IMR-90 (cell line): ENCODE measurements at regions of chr6 and their contacts with region 1.

Region 1: DNA sequence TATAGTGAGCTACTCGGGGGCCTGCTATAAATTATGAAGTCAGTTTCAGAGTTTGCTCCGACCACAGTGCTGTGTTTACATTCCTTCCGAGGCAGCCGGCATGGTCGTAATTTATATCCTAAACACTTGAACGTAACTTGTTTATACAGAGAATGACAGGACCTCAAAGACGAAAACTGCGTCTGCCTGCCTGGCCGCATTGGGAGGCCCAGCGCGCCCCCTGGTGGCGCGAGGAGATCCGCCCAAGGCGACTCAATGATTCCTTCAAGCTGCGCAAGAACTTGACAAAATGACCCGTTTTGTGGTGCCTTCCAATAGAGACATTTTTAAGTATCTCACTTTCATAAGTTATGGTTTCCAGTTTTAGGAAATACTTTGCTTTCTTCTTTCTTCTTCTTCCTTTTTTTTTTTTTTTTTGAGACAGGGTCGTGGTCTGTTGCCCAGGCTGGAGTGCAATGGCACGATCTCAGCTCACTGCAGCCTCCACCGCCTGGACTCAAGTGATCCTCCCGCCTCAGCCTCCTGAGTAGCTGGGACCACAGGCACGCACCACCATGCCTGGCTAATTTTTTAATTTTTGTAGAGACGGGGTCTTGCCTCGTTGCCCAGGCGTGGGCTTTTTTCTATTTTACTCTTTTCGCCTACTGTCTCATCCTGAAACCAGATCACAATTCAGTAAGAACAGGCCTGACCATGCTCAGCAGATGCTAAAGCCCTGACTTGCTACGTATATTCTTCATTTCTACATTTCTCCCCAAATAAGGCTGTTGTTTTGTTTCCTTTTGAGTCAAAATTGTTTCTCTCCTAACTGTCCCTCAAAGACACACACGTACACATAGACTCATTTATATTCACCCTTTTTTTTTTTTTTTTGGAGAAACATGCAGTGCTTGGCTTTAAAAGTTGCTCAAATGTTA is 7.8 kb downstream of the FOXF2 start:
- DNase-seq: peak; percentile 98
- ATAC-seq: peak; percentile 55
- H3K4me3 ChIP-seq: no peak overlapping the region
- H3K27ac ChIP-seq: no peak overlapping the region
- H3K4me1 ChIP-seq: peaks cover 19% of the 10 kb centered on the region
- H3K27me3 ChIP-seq: no peaks in the 10 kb centered on the region; the same call in 1 of the 2 replicates
- CTCF ChIP-seq: peak; percentile 98
- POLR2A ChIP-seq: peak; percentile 46; the same call in 1 of the 2 replicates
- RAD21 ChIP-seq: peak; percentile 93

Region 2: DNA sequence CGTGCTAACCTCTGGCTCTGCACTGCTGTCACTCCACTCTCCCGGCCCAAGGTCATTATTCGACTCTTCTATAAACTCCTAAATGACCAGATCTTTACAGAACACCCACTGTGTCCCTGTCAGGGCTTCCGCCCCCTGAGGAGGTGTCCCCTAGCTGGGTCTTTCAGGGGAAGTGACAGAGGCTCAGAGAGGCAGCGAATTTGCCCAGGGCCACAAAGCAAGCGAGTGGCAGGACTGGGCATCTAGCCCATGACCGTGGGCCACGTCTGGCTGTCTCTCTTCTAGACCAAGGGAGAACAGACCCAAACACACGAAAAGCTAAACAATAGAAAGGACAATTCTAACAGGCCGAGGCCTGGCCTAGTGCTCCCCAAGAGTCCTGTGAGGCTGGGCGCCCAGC is 19.6 kb after region 1 on chr6:
- CTCF ChIA-PET with region 1: interaction called, 5 read pairs
- POLR2A ChIA-PET with region 1: no interaction called
- dilution Hi-C with region 1: no loop called
- in situ Hi-C with region 1: no loop called
- intact Hi-C with region 1: loop called (anchors 1 kb)
- DNase-seq: no peak
- ATAC-seq: no peak
- H3K4me3 ChIP-seq: no peak overlapping the region
- H3K27ac ChIP-seq: no peak overlapping the region
- H3K4me1 ChIP-seq: peaks cover 4% of the 10 kb centered on the region; the same call in 1 of the 2 replicates
- H3K27me3 ChIP-seq: peaks cover 3% of the 10 kb centered on the region
- CTCF ChIP-seq: no peak
- POLR2A ChIP-seq: no peak
- RAD21 ChIP-seq: no peak

Region 3: GRCh38 chr6:1436334-1437306 is 39.4 kb after region 1 on chr6:
- CTCF ChIA-PET with region 1: no interaction called
- POLR2A ChIA-PET with region 1: no interaction called
- dilution Hi-C with region 1: no loop called
- in situ Hi-C with region 1: no loop called
- intact Hi-C with region 1: loop called (anchors 5 kb)
- DNase-seq: peak; percentile 72
- ATAC-seq: peak; percentile 99
- H3K4me3 ChIP-seq: no peak overlapping the region
- H3K27ac ChIP-seq: no peak overlapping the region
- H3K4me1 ChIP-seq: no peaks in the 10 kb centered on the region
- H3K27me3 ChIP-seq: peaks cover 20% of the 10 kb centered on the region
- CTCF ChIP-seq: peak; percentile 90
- POLR2A ChIP-seq: no peak
- RAD21 ChIP-seq: peak; percentile 84